Cardiac septum (tissue), 1 donor: ENCODE measurements at regions of chr4 and their contacts with region 1.

Region 1: DNA sequence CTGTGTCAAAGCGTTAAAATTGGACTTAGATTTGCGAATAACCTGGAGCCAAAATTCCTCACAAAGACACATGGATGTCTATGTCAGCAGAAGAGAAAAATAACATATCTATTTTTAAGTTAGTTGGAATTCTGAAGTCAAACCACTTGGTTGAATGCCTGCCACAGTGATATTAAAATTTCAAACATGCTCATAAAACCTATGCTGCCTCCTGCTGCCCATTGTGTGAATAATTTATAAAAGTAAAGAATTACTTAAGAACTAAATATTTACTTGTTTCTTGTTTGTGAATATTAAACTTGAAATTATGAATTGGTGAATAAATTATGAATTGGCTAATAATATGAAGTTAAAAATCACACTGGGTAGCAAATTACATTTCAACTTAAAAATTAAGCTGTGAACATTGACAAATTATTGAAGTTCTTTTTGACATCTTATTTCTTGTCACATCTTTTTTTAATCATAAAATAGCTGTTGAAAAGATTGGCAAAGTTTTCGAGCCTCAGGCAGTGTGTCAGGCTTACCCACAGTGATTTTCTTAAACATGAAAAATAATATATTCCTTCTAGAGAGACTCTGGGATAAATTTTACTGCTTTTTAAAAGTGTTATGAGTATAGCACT is 35.4 kb downstream of the FABP2 start:
- DNase-seq: no peak

Region 2: GRCh38 chr4:118740869-118741268 is 545.6 kb before region 1 on chr4:
- intact Hi-C with region 1: loop called (anchors 10 kb)
- DNase-seq: no peak

Region 3: DNA sequence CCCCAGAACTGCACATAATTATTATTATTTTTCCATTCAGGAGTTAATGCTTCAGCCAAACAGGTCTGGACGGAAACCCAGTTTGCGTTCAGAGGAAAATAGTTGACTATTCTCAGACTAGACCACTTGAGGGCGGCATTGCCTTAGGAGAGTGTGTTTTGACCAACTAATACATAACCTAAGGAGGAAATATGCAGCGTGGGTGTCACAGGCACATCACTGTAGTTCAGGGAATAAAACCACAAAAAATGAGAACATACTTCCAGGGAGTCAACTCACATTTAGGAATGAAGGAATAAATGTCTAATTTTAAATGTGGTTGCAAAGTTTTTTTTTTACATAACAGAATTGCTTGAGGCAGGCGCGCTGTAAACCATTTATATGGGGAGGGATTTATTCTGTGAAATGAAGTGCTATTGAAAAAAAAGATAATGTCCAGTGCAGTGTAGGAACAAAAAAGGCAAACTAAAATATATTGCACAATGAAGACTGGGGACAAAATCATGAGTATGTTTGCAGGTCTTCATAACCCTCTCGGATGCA is 304.6 kb before region 1 on chr4:
- intact Hi-C with region 1: loop called (anchors 5 kb)
- DNase-seq: no peak

Region 4: GRCh38 chr4:119103263-119103662 is 183.2 kb before region 1 on chr4:
- intact Hi-C with region 1: loop called (anchors 10 kb)
- DNase-seq: no peak